ENCODE measurements at regions of chr18 and their contacts with region 1.

Region 1: DNA sequence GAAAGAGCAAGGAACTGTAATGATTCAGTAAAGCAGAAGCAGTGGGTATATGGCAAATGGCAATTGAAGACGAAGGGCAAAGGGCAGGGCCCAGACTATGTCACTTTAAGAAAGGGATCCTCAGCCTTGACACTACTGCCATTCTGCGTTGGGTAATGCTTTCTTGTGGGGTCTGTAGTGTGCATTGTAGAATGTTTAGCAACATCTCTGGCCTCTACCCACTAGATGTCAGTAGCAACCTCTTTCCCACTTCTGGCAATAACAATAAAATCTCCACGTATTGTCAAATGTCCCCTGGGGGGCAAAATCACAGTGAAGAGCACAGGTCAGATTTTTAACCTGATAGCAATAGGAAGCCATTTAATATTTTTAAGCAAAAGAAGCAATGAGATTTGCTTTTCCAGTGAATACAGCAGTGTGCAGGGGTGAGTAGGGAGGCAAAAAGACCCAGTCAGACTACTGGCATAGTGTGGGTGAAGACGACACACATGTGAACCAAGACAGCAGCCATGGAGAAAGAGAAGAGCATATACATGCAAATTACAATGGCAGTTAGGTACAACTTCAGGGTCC is 209.5 kb downstream of the DYM start:
- DNase-seq: no peak

Region 2: DNA sequence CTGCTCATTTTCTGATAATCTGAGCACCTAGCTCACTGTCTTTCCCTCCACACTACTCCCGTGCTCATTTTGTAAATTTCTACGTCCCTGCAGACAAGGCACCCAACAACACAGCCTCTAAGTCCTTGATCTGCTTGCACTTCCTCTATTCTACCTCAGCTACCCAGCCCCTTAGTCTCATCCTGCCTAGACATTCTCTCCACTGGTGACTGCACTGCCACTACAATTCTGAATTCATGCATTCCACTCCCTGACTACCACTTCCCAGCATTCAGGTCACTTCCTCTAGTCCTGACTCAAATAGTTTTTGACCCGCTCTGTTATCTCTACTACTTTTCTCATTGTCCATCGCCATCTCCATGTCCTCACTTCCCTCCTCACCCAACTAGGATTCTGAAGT is 53.8 kb after region 1 on chr18:
- intact Hi-C with region 1: no loop called
- DNase-seq: no peak

Region 3: DNA sequence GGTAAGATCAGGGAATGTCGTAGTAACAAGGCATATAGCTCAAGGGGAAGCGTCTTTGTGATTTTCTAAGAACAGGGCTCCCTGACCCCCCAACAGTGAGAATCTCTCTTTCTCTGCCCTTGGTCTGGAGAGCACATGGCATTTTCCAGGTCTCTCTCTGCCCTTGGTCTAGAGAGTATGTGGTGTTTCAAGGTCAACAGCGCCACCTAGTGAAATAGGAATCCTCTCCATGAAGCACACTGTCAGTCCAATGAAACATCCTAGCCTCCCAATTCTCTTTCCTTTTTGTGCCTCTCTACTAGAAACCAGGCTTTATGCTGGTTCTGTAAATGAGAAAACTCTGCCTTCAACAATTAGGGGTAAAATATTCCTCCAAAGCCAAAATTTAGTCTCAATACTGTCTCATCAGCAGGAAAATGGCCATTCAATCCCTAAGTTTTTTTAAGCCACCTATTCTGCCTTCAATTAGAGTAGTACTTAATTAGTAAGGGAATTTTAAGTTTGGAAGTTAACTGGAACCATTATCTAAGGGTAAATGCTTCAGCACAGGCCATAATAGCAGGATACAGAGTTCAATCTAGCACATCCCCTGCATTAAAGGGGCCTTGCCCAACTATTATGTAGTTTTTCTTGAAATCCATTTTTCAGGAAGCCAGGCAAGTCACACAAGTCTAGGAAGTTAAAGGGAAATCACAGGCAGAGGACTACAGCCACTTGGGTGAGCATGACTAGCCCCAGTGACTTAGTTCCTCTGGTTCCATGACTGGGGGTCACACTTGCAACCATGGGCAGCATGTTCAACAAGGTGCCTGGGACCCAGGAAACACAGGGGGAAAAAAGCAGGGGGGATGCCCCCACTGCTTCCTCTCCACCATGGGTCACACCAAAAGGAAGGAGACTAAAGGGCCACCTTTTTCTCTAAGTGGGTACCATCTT is 197.2 kb after region 1 on chr18:
- intact Hi-C with region 1: loop called (anchors 10 kb)
- DNase-seq: no peak